Dendritic cell treated with granulocyte-macrophage colony-stimulating factor and Interleukin-4, amounts not matched to agents 40 ng/mL and 50 ng/mL, for 4 days (primary cell): ENCODE measurements at regions of chr5 and their contacts with region 1.

Region 1: DNA sequence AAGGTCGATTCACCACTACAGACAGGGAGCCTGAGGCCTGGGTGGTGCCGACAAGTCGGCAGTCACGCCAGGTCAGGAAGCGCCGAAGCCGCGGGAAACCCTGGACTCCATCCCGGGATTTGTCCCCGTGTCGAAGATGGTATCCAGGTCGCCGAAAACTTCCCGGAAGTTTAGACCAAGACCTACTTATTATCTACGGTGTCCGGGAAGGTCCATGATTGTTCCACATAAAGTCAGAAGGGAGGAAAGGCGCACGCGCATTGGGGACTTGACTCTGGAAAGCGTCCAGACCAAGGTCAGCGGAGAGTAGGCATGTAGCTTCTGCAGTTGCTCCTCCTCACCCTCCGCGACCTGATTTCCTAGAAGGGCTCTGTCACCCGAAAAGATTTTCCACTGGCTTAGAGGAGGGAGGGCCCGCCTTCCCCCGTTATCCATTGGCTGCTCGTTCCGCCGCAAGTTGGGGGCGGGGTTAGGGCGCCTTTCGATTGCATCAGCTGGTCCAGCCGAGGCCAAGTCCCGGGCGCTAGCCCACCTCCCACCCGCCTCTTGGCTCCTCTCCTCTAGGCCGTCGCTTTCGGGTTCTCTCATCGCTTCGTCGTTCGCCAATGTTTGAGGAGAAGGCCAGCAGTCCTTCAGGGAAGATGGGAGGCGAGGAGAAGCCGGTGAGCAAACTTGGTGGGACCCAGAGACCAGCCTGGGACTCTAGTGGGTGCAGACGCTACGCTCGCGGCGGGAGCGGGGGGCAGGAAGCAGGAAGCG is at the start of gene TARS1:
- H3K4me3 Mint-ChIP-seq: no peak within 1 kb of the TSS
- H3K27ac Mint-ChIP-seq: no peak within 1 kb of the TSS
- H3K4me1 Mint-ChIP-seq: peaks cover 20% of the 10 kb centered on the region
- H3K27me3 Mint-ChIP-seq: no peaks in the 10 kb centered on the region

Region 2: GRCh38 chr5:33401482-33402390 is 38.9 kb before region 1 on chr5:
- intact Hi-C with region 1: no loop called
- H3K4me3 Mint-ChIP-seq: no peak overlapping the region
- H3K27ac Mint-ChIP-seq: no peak overlapping the region
- H3K4me1 Mint-ChIP-seq: no peaks in the 10 kb centered on the region
- H3K27me3 Mint-ChIP-seq: no peaks in the 10 kb centered on the region

Region 3: DNA sequence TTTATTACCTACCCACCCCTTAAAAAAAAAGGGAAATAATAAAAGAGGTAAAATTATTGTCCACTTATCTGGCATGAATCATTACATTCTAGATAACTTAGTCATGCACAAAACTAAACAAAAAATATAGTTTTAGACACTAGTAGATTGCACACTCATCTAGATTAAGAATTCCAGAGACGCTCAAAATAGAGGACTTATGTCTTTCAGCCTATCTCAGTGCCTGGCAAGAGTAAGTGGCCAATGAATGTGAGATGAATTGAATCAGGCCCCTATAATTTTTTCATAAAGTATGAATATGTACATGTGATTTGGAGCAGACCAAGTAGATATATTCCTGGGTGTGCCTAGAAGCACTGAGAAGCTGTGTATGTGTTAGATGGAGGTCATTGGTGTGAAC is 493.5 kb after region 1 on chr5:
- intact Hi-C with region 1: loop called (anchors 1 kb)
- H3K4me3 Mint-ChIP-seq: no peak overlapping the region
- H3K27ac Mint-ChIP-seq: no peak overlapping the region
- H3K4me1 Mint-ChIP-seq: no peaks in the 10 kb centered on the region
- H3K27me3 Mint-ChIP-seq: peaks cover 41% of the 10 kb centered on the region

Region 4: DNA sequence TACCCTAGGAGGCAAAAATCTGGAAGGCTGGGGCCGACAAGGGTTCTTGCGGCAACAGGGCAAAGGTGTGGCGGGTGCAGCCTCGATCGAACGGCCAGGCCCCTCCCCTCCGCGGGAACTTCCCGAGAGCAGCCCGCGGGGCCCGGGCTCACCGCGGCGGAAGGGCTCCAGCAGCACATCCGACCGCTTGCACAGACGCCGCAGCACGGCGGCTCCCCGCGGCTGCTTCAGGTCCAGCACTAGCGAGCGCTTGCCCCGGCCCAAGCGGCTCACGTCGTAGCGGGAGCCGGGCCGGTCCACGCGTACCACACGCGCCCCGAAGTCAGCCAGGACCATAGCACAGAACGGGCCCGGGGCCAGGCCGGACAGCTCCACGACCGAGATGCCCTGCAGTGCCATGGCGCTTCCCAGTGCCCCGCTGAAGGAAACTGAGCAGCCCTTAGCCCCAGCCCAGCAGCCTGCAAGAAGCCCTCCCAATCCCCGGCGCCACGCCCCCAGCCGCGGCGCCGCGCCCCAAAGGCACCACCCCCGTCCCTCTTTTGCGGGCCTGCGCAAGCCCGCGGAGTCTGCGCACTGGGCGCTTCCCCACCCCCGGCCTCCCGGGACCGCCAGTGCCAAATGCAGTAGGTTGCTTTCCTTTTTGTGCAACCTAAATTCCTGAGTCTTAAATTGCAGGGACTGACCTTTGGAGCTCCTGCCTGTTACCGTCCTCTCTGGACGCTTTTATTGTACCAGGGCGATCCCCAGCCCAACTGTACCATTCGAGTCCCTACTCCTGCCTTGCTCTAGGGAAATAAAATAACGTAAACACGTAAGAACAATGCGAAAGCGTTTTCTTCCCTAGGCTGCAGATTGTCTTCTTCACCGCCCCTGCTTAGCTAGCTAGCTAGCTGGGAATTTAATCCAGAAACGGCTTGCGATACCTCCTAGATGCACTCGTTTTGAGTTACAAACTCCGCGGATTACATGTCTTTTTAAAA is 567.2 kb after region 1 on chr5 and contains the start of gene AMACR:
- intact Hi-C with region 1: loop called (anchors 2 kb)
- H3K4me3 Mint-ChIP-seq: peak within 1 kb of the TSS; percentile 80
- H3K27ac Mint-ChIP-seq: peak within 1 kb of the TSS; percentile 82
- H3K4me1 Mint-ChIP-seq: peaks cover 17% of the 10 kb centered on the region
- H3K27me3 Mint-ChIP-seq: no peaks in the 10 kb centered on the region